T-cell (primary cell): ENCODE measurements at regions of chr1 and their contacts with region 1.

Region 1: DNA sequence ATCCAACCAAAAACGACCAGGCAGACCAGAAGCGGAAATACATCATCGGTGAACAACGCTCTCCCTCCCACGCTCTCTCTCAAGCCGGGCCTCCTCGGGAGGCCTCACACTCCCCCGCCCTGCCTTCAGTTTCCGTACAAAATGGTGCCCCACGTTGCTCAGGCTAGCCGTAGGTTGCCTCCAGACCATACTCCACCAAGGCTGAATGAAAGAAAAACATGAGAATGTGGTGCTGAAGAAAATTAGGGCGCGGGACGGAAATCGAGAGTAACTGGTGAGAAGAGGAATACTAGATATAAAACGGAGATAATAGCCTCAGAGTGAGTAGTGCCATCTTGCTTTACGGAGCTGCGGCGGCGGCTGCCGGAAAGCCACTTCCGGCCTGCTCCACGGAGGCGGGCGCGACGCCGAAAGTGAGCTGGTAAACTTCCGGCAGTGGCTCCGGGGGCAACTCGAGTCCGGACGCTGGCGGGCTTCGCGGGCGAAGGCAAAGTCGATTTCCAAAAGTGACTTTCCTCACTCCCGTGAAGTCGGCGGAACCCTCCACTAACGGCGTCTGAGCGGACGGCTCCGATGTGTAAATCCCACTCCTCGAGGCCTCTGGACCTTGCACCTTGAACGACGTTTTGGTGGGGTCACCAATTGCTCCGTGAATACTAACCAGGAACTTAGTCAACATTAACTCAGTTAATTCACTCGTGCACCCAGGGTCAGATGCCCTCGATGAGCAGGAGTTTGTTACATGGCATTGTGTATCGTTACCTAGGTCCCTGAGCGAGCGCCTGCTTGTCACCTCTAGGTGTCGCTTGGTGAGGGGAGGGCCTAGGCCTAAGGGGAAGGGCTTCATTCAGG is at the start of gene SH3BP5L:
- DNase-seq: peak; percentile 83 to 95 (median 90)
- ATAC-seq: peak; percentile 87 to 89 (median 88)
- H3K4me3 ChIP-seq: peak within 1 kb of the TSS; percentile 87 to 94
- H3K4me3 Mint-ChIP-seq: peak within 1 kb of the TSS; percentile 88 to 99 (median 97)
- H3K27ac ChIP-seq: peak within 1 kb of the TSS; percentile 99
- H3K27ac Mint-ChIP-seq: peak within 1 kb of the TSS; percentile 96 to 99
- H3K4me1 ChIP-seq: peaks cover 30 to 58% of the 10 kb centered on the region in 2 experiments
- H3K4me1 Mint-ChIP-seq: peaks cover 54 to 60% (median 59%) of the 10 kb centered on the region in 3 donors
- H3K27me3 ChIP-seq: no peaks in the 10 kb centered on the region
- H3K27me3 Mint-ChIP-seq: no peaks in the 10 kb centered on the region
- total RNA-seq, gene SH3BP5L: 16.8 to 41.4 (median 36.3) TPM

Region 2: DNA sequence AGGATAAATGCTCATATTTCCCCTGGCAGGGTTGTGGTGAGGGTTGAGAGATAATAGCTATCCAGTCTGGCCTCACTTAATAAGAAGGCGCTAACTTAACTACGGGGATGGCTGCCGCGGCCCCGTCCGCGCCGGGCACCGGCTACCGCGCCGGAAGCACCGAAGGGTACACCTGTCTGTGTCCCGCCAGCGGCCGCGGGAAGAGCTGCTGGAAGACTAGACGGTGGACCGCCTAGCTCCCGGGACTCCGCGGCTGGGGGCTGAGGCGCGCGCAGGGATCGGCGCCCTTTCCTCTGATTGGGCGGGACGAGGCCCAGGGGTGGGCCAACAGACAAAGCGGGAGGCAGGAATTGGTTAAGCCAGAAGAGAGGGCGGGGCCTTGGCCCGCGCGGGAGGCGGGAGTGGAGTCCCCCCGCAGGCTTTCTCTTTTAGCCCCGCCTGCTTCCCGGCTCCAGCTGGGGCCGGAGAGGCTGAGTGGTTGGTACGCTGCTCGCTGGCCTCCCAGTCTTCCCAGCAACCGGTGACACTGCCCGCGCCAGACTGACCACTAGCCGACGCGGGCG is 11.7 kb after region 1 on chr1 and contains the start of gene ZNF672:
- CTCF ChIA-PET with region 1: interaction called, 3 to 14 read pairs
- POLR2A ChIA-PET with region 1: interaction called, 6 to 11 read pairs
- DNase-seq: peak; percentile 85 to 94 (median 91)
- ATAC-seq: peak; percentile 86 to 90 (median 86)
- H3K4me3 ChIP-seq: peak within 1 kb of the TSS; percentile 79 to 87
- H3K4me3 Mint-ChIP-seq: no peak within 1 kb of the TSS
- H3K27ac ChIP-seq: peak within 1 kb of the TSS; percentile 97
- H3K27ac Mint-ChIP-seq: peak within 1 kb of the TSS; percentile 95 to 99
- H3K4me1 ChIP-seq: peaks cover 5 to 32% of the 10 kb centered on the region in 2 experiments
- H3K4me1 Mint-ChIP-seq: peaks cover 27 to 36% (median 29%) of the 10 kb centered on the region in 3 donors
- H3K27me3 ChIP-seq: peaks cover 0 to 3% of the 10 kb centered on the region in 2 experiments
- H3K27me3 Mint-ChIP-seq: peaks cover 0 to 4% of the 10 kb centered on the region in 2 donors
- total RNA-seq, gene ZNF672: 27.7 to 46.7 (median 42.1) TPM

Region 3: DNA sequence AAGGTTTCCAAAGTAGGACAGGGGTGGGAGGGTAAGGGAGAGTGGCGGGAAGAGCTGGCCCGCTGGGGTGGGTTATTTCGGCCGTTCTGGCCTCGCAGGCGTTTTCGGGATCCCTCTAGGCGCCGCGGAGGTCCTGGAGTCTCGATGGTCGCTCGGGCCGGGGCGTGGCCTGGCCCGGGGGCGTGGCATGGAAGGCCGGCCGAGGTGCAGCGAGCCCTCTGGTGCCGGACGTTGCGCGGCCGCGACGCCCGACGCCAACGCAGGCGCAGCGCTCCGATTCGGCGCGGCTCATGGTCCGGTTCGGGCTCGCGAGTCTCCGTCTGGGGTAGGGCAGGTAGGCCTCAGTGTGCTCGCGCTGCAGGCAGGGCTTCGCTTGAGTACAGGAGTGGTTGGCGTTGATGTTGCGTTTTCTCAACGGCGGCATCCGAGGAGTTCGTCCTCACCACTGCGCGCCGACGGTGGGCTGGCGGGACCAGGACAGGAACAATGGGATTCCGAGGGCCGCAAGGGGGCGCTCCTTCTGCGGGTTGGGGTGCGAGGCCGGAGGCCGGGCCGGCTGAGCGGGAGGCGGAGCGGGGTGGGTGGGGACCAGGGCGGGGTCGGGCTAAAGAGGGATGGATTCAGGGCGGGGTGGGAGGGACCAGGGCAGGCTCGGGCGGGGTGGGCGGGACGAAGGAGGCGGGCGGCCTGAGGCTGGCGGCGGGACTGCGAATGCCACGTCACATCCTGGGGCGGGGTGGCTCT is 80.0 kb after region 1 on chr1 and contains the start of gene PGBD2:
- CTCF ChIA-PET with region 1: interaction called, 3 to 16 read pairs
- POLR2A ChIA-PET with region 1: interaction called in 1 of 2 experiments, 8 read pairs
- DNase-seq: peak; percentile 83 to 97 (median 91)
- ATAC-seq: peak; percentile 84 to 87 (median 86)
- H3K4me3 ChIP-seq: peak within 1 kb of the TSS; percentile 57 to 72
- H3K4me3 Mint-ChIP-seq: peak within 1 kb of the TSS; percentile 90 to 98 (median 97)
- H3K27ac ChIP-seq: peak within 1 kb of the TSS; percentile 80
- H3K27ac Mint-ChIP-seq: peak within 1 kb of the TSS; percentile 98
- H3K4me1 ChIP-seq: peaks cover 2 to 14% of the 10 kb centered on the region in 2 experiments
- H3K4me1 Mint-ChIP-seq: peaks cover 33 to 44% (median 43%) of the 10 kb centered on the region in 3 donors
- H3K27me3 ChIP-seq: no peaks in the 10 kb centered on the region
- H3K27me3 Mint-ChIP-seq: no peaks in the 10 kb centered on the region
- total RNA-seq, gene PGBD2: 5.0 to 15.8 (median 11.4) TPM